Posterior vena cava (tissue), 2 donors: ENCODE measurements at regions of chr17 and their contacts with region 1.

Region 1: GRCh38 chr17:34987232-34987631 is 6.9 kb downstream of the LIG3 start:
- DNase-seq: no peak

Region 2: GRCh38 chr17:34930283-34930682 is 56.9 kb before region 1 on chr17:
- intact Hi-C with region 1: loop called in 1 of 2 experiments (anchors 2 kb)
- DNase-seq: no peak